ENCODE measurements at regions of chr2 and their contacts with region 1.

Region 1: GRCh38 chr2:67616749-67617148 is 219.6 kb downstream of the ETAA1 start:
- DNase-seq: peak in 2 of 5 donors; percentile 4 to 33
- H3K4me3 ChIP-seq: no peak overlapping the region
- H3K27ac ChIP-seq: no peak overlapping the region
- H3K4me1 ChIP-seq: peaks cover 2% of the 10 kb centered on the region
- H3K27me3 ChIP-seq: no peaks in the 10 kb centered on the region
- CTCF ChIP-seq: no peak
- EP300 ChIP-seq: no peak
- POLR2A ChIP-seq: no peak

Region 2: GRCh38 chr2:66547887-66548286 is 1068.9 kb before region 1 on chr2:
- intact Hi-C with region 1: loop called in 1 of 4 experiments (anchors 5 kb)
- DNase-seq: no peak
- H3K4me3 ChIP-seq: no peak overlapping the region
- H3K27ac ChIP-seq: no peak overlapping the region
- H3K4me1 ChIP-seq: peaks cover 3% of the 10 kb centered on the region
- H3K27me3 ChIP-seq: no peaks in the 10 kb centered on the region
- CTCF ChIP-seq: no peak
- EP300 ChIP-seq: no peak
- POLR2A ChIP-seq: no peak

Region 3: GRCh38 chr2:67854798-67855197 is 238.0 kb after region 1 on chr2:
- intact Hi-C with region 1: no loop called
- DNase-seq: no peak
- H3K4me3 ChIP-seq: no peak overlapping the region
- H3K27ac ChIP-seq: no peak overlapping the region
- H3K4me1 ChIP-seq: no peaks in the 10 kb centered on the region
- H3K27me3 ChIP-seq: no peaks in the 10 kb centered on the region
- CTCF ChIP-seq: no peak
- EP300 ChIP-seq: no peak
- POLR2A ChIP-seq: no peak

Region 4: DNA sequence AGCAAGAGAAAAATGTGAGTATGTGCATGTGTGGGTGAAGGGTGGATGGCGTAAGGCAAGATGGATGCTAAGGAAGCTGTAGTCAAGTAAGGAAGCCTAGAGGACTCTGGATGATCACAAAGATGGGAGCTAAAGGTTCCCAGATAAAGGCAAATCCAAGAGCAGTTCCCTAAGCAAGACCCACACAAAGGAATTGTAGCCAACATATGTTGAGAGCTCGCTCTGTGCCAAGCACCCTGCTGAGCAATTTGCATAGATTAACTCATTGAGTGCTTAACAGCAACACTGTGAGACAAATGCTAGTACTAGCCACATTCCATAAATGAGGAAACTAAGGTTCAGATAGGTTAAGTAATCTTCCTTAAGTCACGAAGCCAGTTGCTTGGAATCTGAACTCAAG is 313.4 kb after region 1 on chr2:
- intact Hi-C with region 1: no loop called
- DNase-seq: no peak
- H3K4me3 ChIP-seq: no peak overlapping the region
- H3K27ac ChIP-seq: no peak overlapping the region
- H3K4me1 ChIP-seq: no peaks in the 10 kb centered on the region
- H3K27me3 ChIP-seq: no peaks in the 10 kb centered on the region
- CTCF ChIP-seq: no peak
- EP300 ChIP-seq: no peak
- POLR2A ChIP-seq: no peak